Vagina (tissue), 2 donors: ENCODE measurements at regions of chr12 and their contacts with region 1.

Region 1: GRCh38 chr12:64403707-64404469 is at the start of gene XPOT:
- DNase-seq: peak in 1 of 2 donors; percentile 95
- H3K4me3 ChIP-seq: peak within 1 kb of the TSS; percentile 75 to 98
- H3K27ac ChIP-seq: peak within 1 kb of the TSS; percentile 92
- H3K4me1 ChIP-seq: peaks cover 11% of the 10 kb centered on the region
- H3K27me3 ChIP-seq: no peaks in the 10 kb centered on the region
- CTCF ChIP-seq: no peak
- POLR2A ChIP-seq: no peak
- total RNA-seq, gene XPOT: 46.2 TPM

Region 2: DNA sequence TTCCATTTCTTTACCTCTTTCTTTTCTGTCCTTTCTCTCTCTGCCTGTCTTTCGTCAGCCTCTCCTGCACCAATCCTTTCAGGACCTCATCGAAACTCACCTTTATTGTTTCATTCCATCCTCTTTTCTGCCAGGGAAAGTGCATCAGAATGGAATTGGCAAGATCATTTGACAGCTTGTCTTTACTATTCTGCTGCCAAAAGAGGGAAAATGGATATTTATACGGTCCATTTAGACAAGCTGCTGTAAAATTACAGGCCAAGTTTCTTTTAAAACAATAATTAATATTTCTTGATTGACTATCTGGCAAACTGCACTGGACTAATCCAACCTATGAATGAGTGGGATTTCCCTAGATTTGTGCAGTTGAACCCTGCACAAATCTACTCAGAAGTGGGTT is 567.0 kb before region 1 on chr12:
- intact Hi-C with region 1: loop called (anchors 10 kb)
- DNase-seq: no peak
- H3K4me3 ChIP-seq: no peak overlapping the region
- H3K27ac ChIP-seq: no peak overlapping the region
- H3K4me1 ChIP-seq: no peaks in the 10 kb centered on the region
- H3K27me3 ChIP-seq: no peaks in the 10 kb centered on the region
- CTCF ChIP-seq: no peak
- POLR2A ChIP-seq: no peak

Region 3: DNA sequence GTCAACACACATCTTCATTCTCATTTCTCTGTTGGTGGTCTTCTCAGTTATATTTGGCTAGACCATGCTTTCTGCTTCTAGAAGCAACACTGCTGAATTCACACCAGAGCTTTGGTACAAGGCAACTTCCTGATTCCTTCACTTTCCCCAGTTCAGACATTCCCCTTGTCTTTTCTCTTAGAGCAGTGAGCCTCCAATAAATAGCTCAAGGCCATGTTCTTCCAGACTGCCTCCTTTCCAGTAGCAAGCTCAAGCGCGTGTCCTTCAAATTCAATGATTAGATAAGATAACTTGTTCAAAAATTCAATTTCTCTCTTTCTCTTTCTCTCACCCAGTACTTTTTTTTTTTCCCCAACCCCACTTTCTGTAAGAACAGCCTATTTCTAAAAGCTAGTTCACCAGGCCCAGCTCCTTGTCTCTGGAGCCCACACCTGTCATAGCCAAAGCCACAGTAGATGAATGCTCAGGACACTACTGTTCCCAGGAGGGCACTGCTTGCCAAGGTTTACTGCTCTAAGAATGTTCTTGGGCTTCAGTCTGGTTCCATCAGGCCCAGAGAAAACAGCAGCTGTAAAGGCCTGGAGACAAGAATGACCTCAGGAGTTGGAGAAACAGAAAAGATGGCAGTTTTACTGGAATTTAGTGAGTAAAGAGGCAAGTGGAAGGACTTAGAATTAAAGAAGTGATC is 65.7 kb after region 1 on chr12:
- intact Hi-C with region 1: no loop called
- DNase-seq: no peak
- H3K4me3 ChIP-seq: no peak overlapping the region
- H3K27ac ChIP-seq: no peak overlapping the region
- H3K4me1 ChIP-seq: no peaks in the 10 kb centered on the region
- H3K27me3 ChIP-seq: no peaks in the 10 kb centered on the region
- CTCF ChIP-seq: no peak
- POLR2A ChIP-seq: no peak